Aorta (tissue), 5 donors: ENCODE measurements at regions of chr10 and their contacts with region 1.

Region 1: DNA sequence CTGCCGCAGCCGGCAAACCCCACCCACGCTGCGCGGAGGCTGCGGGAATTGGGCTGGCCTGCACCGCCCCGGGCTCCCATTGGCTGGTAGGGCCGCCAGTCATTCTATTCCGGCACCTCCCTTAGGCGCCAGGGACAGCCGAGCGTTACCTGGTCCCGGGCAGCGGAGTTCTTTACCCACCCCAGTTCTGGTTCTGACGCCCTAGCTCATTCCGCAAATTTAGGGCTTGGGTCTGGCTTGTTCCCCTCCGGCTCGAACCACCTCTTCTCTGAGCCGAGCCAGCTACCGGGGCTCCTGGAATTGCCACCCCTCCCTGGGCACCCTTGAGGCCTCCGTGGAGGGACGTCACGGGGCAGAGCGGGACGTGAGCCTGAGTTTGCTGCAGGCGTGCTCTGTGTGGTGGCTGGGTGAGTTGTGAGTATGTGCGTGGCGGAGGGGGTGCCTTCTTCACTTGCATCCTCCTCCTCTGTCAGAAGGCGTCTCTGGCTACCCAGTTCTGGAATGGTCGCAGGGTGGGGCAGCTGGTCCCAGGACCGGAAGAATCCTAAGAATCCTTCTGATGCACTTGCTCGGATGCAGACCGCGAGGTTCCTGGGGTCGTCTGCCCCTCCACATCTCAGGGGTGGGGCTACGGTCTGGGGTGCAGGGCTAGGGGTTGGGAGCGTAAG is at the starts of genes PDZD7 and SFXN3:
- DNase-seq: peak; percentile 98 to 99
- ATAC-seq: peak; percentile 93
- H3K4me3 ChIP-seq: peak within 1 kb of the TSS; percentile 20 to 60
- H3K27ac ChIP-seq: peak within 1 kb of the TSS; percentile 57 to 86
- H3K4me1 ChIP-seq: no peaks in the 10 kb centered on the region
- H3K27me3 ChIP-seq: no peaks in the 10 kb centered on the region
- total RNA-seq, gene PDZD7: 1.1 to 1.6 TPM
- total RNA-seq, gene SFXN3: 91.5 to 113 TPM

Region 2: GRCh38 chr10:100912605-100913469 is 118.4 kb before region 1 on chr10 and contains the start of gene SLF2:
- intact Hi-C with region 1: loop called in 1 of 2 experiments (anchors 5 kb)
- DNase-seq: peak; percentile 98
- ATAC-seq: peak; percentile 99
- H3K4me3 ChIP-seq: peak within 1 kb of the TSS; percentile 72 to 76
- H3K27ac ChIP-seq: peak within 1 kb of the TSS; percentile 52 to 96
- H3K4me1 ChIP-seq: peaks cover 0 to 4% of the 10 kb centered on the region in 2 donors
- H3K27me3 ChIP-seq: no peaks in the 10 kb centered on the region
- total RNA-seq, gene SLF2: 20.3 to 38.3 TPM

Region 3: GRCh38 chr10:100998991-100999741 is 32.1 kb before region 1 on chr10:
- intact Hi-C with region 1: loop called in 1 of 2 experiments (anchors 5 kb)
- DNase-seq: peak; percentile 91 to 95
- ATAC-seq: peak; percentile 90
- H3K4me3 ChIP-seq: peak overlapping the region; percentile 69
- H3K27ac ChIP-seq: peak overlapping the region; percentile 85 to 99
- H3K4me1 ChIP-seq: no peaks in the 10 kb centered on the region
- H3K27me3 ChIP-seq: no peaks in the 10 kb centered on the region

Region 4: DNA sequence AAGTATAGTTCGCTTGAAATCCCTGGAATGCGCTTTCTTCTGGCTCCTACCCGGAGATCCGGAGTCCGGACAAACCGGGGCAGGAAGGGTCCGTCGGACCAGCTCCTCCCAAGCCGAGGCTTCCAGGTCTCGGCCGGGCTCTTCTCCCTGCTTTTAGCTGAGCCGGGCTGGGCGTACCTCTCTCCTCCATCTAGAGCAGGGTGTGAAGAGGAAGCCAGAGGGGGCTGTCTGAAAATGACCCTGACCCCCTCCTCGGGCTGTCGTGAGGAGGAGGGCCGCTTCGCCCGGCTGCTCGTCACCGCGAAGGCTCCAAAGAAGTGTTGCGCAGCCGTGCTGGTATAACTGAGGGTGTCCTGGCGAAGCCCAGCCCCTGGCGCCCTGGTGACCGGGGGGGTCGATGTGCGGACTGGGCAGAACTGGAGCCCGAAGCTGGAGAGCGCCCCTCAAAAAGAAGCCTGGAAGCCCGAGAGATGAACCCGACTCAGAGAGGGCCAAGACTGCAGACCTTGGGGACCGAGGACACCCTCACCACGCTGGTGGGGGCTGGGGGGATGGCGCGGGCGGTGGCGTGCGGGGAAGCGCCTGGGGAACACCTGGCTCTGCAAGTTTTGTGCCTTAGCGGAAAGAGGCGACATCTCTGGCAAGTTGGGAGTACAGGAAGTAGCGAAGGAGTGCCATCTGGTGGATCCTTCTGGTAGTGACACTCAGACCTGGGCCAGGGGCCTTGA is 36.3 kb after region 1 on chr10:
- intact Hi-C with region 1: loop called in 1 of 2 experiments (anchors 5 kb)
- DNase-seq: peak; percentile 76 to 85
- ATAC-seq: peak; percentile 81
- H3K4me3 ChIP-seq: peak overlapping the region; percentile 12 to 66
- H3K27ac ChIP-seq: peak overlapping the region in 1 of 2 donors; percentile 9
- H3K4me1 ChIP-seq: no peaks in the 10 kb centered on the region
- H3K27me3 ChIP-seq: no peaks in the 10 kb centered on the region

Region 5: DNA sequence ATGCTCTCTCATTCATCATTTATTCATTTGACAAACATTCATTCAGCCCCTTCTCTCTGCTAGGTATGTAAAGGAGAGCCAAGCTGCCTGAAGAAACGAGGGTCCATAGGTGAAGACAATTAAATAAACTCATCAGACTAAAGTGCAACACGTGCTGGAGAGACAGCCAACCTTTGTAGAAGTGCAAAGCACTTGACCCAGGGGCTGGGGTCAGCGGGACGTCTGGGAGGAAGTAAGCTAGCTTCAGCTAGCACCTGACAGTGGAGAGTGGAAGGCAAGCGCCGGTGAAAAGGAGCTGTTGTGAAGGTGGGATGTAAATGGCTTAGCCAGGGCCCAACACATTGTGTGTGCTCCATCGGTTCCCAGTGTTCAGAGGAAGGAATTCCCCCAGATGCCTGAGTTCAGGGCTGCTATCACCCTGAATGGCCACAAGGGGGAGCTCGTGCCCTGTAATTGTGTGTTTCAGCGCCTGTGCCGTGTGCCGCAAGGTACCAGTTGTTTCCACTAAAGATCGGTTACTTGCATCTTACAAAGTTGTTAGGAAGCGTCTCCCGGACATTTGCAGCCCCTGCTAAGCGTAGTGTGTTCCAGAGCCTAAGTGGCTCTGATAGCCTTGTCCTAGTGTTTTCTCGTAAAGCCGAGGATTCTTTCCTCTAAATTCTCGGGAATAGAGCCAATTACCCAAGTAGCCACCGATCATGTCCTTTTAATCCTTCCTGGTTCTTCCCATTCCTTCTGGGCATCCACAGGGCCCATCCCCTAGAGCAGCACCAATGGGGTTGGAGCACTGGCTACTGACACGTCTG is 130.4 kb after region 1 on chr10:
- intact Hi-C with region 1: no loop called
- DNase-seq: peak; percentile 70 to 87
- ATAC-seq: peak; percentile 89
- H3K4me3 ChIP-seq: no peak overlapping the region
- H3K27ac ChIP-seq: no peak overlapping the region
- H3K4me1 ChIP-seq: no peaks in the 10 kb centered on the region
- H3K27me3 ChIP-seq: no peaks in the 10 kb centered on the region